Dorsolateral prefrontal cortex (tissue), 120 donors: ENCODE measurements at regions of chr3 and their contacts with region 1.

Region 1: DNA sequence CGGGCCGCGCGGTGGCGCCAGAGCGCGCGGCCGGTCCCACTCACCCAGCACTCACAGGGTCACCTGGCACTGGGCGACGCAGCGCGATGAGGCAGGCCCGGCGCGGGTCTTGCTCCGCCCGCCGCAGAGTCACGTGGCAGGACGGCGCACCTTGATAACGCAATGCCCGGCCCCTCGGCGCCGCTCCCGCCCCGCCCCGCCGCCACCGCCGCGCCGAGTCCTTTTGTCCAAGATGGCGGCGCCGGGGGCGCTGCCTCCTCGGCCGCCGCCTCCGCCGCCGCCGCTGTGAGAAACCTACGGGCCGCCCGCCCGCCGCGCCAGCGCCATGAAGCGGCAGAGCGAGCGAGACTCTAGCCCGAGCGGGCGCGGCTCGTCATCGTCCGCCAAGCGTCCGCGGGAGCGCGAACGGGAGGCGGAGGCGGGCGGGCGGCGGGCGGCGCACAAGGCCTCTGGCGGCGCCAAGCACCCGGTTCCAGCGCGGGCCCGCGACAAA is at the start of gene RBM15B:
- DNase-seq: peak; percentile 93 to 99 (median 97)
- H3K4me3 ChIP-seq: peak within 1 kb of the TSS; percentile 56 to 88 (median 74)
- H3K27ac ChIP-seq: peak within 1 kb of the TSS; percentile 39 to 96 (median 83)
- H3K27me3 ChIP-seq: no peaks in the 10 kb centered on the region
- CTCF ChIP-seq: peak in 48 of 56 donors; percentile 1 to 99 (median 96)
- total RNA-seq, gene RBM15B: 15.0 to 22.9 (median 19.1) TPM

Region 2: DNA sequence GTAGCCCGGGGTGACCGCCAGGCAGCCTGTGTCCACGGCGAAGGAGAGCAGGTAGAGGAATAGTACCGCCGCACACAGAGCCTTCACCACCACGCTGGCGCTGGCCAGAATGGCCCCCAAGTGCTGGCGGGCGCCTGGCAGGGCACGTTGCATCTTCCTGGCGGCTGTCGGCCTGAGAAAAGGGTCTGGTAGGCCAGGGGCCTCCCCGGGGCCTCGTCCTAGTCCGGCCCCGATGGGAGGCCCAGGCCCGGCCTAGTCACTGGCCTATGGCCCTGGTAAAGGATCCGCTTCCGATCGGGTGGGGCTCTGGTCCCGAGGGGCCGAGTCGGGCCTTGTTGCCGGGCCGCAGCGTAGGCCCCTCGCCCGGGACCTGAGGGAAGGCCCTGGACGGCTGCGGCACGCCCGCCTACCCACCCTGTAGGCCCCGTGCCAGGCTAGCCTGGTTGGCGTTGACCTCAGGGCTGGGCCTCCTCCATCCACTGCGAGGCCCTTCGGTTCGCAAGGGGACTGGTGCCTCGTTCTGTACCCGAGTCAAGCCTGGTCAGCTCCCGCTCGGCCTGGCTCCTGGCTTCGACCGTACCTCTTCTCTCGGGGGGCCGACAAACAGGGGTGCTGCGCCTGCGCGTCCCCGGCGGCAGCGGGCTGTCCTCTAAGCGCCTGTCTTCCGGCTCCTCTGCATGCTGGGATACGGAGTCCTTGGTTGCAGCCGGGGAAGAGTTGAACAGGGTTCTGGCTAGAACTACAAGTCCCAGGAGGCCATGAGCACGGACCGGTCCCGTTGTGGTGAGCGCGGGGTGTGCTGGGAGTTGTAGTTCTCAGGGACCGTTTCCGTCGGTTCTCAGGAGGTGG is 1032.0 kb before region 1 on chr3 and contains the start of gene TMEM115:
- intact Hi-C with region 1: loop called (anchors 5 to 10 kb)
- DNase-seq: peak; percentile 97 to 100 (median 99)
- H3K4me3 ChIP-seq: peak within 1 kb of the TSS; percentile 62 to 100 (median 96)
- H3K27ac ChIP-seq: peak within 1 kb of the TSS; percentile 40 to 98 (median 88)
- H3K27me3 ChIP-seq: no peaks in the 10 kb centered on the region
- CTCF ChIP-seq: peak in 28 of 56 donors; percentile 6 to 54 (median 25)
- total RNA-seq, gene TMEM115: 19.2 to 33.5 (median 26.4) TPM

Region 3: GRCh38 chr3:50674349-50675178 is 716.6 kb before region 1 on chr3 and contains the start of gene DOCK3:
- intact Hi-C with region 1: loop called (anchors 5 kb)
- DNase-seq: peak in 8 of 10 donors; percentile 16 to 81 (median 50)
- H3K4me3 ChIP-seq: peak within 1 kb of the TSS; percentile 44 to 81 (median 69)
- H3K27ac ChIP-seq: peak within 1 kb of the TSS in 56 of 59 donors; percentile 21 to 90 (median 74)
- H3K27me3 ChIP-seq: no peaks in the 10 kb centered on the region
- CTCF ChIP-seq: peak in 1 of 56 donors; percentile 15
- total RNA-seq, gene DOCK3: 58.3 to 141 (median 105) TPM

Region 4: DNA sequence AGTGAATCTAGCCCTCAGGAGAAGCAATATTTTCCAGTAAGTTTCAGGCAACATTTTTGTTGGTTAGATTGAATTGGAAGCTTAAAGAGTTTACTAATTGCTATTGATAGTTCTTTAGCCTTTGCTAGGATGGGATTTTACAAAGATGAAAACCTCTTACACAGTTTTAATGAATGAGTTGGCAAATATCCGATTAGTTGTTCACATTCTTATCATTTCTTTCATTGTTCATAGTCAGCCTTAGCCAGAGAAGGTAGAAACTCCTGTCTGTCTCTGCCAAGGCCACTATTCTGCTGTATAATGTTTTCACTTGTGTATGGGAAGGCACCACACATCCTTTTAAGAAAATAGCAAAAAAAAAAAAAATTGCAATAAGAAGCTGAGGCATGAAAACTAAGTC is 228.1 kb before region 1 on chr3:
- intact Hi-C with region 1: no loop called
- DNase-seq: no peak
- H3K4me3 ChIP-seq: no peak overlapping the region
- H3K27ac ChIP-seq: no peak overlapping the region
- H3K27me3 ChIP-seq: no peaks in the 10 kb centered on the region
- CTCF ChIP-seq: no peak

Region 5: DNA sequence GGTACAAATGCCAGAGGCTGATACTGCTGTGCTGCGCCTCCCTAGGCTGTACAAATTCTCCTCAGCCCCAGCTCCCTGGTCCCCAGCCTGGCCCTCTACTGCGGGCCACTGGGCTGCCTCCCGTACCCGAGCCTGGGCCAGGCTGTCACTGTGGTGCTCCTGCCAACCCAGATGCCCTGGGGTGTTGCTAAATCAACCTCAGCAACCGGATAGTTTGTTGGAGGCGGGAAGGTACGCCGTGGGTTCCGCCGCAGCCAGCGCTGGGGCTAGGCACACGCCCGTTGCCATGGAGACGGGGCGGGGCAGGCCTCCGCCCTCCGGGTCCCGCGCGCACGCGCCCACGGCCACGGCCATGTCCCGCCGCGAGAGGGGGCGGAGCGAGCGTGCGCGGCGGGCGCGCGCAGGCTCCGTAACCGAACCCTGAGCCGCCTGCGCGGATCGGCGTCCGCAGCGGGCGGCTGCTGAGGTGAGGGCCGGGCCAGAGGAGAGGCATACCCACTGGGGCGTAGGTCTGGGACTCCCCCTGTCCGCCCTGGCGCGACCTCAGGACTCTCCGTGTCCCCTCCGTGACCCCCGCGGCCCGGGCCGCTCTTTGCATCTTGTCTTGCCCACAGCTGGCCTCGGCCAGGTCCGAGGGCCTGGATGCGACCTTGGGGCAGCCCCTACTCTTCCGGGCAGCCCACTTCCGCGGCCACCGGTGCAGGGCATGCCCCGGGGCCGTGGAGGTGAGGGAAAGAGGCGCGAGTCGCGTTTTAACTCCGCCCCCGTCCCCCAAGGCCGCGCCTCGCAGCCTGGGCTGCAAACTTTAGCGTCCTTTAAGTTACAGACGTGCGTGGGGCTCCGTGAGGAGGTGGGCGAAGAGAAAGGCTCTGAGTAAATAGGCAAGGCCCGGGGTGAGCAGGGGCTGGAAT is 280.0 kb after region 1 on chr3 and contains the start of gene TEX264:
- intact Hi-C with region 1: loop called (anchors 5 kb)
- DNase-seq: peak; percentile 71 to 92 (median 84)
- H3K4me3 ChIP-seq: peak within 1 kb of the TSS; percentile 77 to 100 (median 93)
- H3K27ac ChIP-seq: peak within 1 kb of the TSS; percentile 23 to 95 (median 86)
- H3K27me3 ChIP-seq: no peaks in the 10 kb centered on the region
- CTCF ChIP-seq: peak in 26 of 56 donors; percentile 3 to 58 (median 32)
- total RNA-seq, gene TEX264: 26.0 to 48.6 (median 36.4) TPM

Region 6: DNA sequence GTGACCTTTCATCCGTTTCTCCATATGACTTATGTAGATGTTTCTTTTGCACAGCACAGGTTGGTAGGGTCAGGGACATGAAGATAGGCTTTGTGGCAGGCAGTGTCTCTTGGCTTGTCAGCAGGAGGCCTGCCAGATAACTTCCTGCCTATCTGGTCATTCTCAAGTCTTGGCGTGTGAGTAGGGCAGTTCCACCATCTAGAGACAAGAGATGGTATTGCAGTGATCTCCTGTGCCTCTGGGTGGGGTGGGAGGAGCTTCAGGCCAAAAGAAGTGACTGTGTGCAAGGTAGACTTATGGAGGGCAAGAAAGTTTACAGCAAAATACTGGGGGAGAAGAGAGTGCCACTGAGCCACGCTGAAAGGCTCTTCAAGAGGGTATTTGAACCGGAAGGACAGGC is 291.0 kb after region 1 on chr3:
- intact Hi-C with region 1: loop called in 1 of 2 experiments (anchors 5 kb)
- DNase-seq: peak in 7 of 10 donors; percentile 43 to 75 (median 60)
- H3K4me3 ChIP-seq: no peak overlapping the region
- H3K27ac ChIP-seq: peak overlapping the region in 16 of 59 donors; percentile 3 to 63 (median 30)
- H3K27me3 ChIP-seq: no peaks in the 10 kb centered on the region
- CTCF ChIP-seq: peak; percentile 16 to 82 (median 71)